ENCODE measurements at regions of chr9 and their contacts with region 1.

Region 1: DNA sequence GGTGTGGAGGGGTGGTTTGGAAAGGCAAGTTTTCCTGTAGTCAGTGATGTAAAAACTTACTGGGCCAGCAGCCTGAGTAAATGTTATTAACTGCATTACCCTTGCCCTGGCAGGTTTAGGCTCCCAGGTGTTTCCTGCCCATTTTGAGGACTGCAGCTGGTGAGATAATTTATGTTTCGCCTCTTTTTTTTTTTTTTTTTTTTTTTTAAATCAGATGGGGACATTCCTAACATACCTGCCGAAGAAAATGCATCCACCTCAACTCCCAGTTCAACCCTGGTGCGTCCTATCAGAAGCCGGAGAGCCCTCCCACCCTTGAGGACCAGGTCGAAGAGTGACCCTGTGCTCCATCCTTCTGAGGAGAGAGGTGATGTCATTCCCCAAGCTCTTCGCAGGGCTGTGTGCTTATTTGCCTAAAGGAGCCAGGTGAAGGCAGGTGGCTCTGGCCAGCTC is 60.6 kb downstream of the ENTREP1 start:
- DNase-seq: no peak
- ATAC-seq: no peak
- H3K4me3 ChIP-seq: no peak overlapping the region
- H3K4me3 Mint-ChIP-seq: no peak overlapping the region
- H3K27ac ChIP-seq: no peak overlapping the region
- H3K27ac Mint-ChIP-seq: no peak overlapping the region
- H3K4me1 ChIP-seq: no peaks in the 10 kb centered on the region
- H3K4me1 Mint-ChIP-seq: no peaks in the 10 kb centered on the region
- H3K27me3 ChIP-seq: no peaks in the 10 kb centered on the region
- H3K27me3 Mint-ChIP-seq: peaks cover 0 to 9% of the 10 kb centered on the region in 2 donors
- CTCF ChIP-seq: no peak

Region 2: DNA sequence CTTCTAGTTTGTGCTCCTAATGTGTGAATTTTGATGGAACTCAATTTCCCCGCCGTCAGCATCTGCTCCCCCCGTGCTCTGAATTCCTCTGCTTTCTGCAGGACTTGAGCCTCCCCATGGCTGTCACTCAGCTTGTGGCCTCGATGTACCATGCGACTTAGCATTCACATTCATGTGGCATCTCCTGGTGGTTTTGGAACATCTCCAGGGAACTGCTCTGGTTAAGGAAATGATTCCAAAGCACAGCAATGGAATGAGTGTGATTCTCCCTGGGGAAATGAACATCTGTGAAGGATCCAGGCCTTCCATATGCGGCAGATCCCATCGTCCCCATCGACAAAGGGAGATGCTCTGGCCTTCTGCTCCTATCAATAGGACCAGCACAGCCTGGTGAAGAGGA is 58.4 kb after region 1 on chr9:
- intact Hi-C with region 1: loop called (anchors 10 kb)
- DNase-seq: no peak
- ATAC-seq: no peak
- H3K4me3 ChIP-seq: no peak overlapping the region
- H3K4me3 Mint-ChIP-seq: no peak overlapping the region
- H3K27ac ChIP-seq: no peak overlapping the region
- H3K27ac Mint-ChIP-seq: no peak overlapping the region
- H3K4me1 ChIP-seq: no peaks in the 10 kb centered on the region
- H3K4me1 Mint-ChIP-seq: no peaks in the 10 kb centered on the region
- H3K27me3 ChIP-seq: no peaks in the 10 kb centered on the region
- H3K27me3 Mint-ChIP-seq: peaks cover 3 to 17% of the 10 kb centered on the region in 2 donors
- CTCF ChIP-seq: no peak